ENCODE measurements at regions of chr3 and their contacts with region 1.

Region 1: DNA sequence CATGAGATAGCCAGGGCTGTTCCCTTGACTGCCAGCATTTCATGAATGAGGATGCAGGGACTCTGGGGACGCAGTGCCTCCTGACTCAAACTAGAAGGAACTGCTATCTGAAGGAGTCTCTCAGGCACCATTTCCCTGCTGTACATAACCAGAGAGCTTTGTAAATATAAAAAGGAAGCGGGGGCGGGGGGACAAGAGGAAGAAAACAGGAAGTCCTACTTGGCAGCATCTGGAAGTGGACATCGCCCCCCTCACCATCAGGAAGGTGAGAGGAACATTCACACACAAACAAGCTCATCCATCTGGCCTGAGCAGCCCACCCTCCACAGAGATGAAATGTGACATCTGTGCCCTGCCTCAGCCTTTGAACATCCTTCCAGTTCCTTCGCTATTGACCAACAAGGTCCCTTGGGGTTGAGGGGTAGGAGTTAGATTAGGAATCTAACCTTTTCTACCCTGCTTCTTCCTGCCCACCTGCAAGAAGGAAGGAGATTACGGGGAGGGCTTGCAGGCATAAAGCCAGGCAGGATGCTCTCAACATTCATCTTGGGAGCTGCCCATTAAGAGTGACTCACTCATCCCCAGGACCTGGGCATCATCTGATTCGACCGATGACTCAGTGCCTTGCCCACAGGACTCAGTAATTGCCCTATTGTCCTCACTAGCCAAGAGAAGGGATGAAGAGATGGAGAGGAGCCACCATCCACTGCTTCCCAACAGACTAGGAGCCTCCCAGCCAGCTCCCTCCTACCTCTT is 31.9 kb downstream of the SH3BP5 start:
- DNase-seq: no peak
- ATAC-seq: peak; percentile 83
- H3K4me3 ChIP-seq: no peak overlapping the region
- H3K4me3 Mint-ChIP-seq: peak overlapping the region; percentile 1 to 62 (median 50)
- H3K27ac ChIP-seq: no peak overlapping the region
- H3K27ac Mint-ChIP-seq: peak overlapping the region in 6 of 9 donors; percentile 5 to 65 (median 38)
- H3K4me1 ChIP-seq: peaks cover 47 to 73% of the 10 kb centered on the region in 2 donors
- H3K4me1 Mint-ChIP-seq: peaks cover 51 to 97% (median 78%) of the 10 kb centered on the region in 7 donors
- H3K27me3 ChIP-seq: no peaks in the 10 kb centered on the region
- H3K27me3 Mint-ChIP-seq: no peaks in the 10 kb centered on the region

Region 2: GRCh38 chr3:15319575-15319974 is 19.1 kb after region 1 on chr3:
- CTCF ChIA-PET with region 1: interaction called, 3 read pairs
- POLR2A ChIA-PET with region 1: interaction called, 9 read pairs
- intact Hi-C with region 1: loop called in 1 of 2 experiments (anchors 2 kb)
- DNase-seq: no peak
- ATAC-seq: no peak
- H3K4me3 ChIP-seq: no peak overlapping the region
- H3K4me3 Mint-ChIP-seq: peak overlapping the region in 6 of 10 donors; percentile 44 to 71 (median 66)
- H3K27ac ChIP-seq: no peak overlapping the region
- H3K27ac Mint-ChIP-seq: peak overlapping the region in 8 of 9 donors; percentile 33 to 90 (median 62)
- H3K4me1 ChIP-seq: peaks cover 46 to 64% of the 10 kb centered on the region in 2 donors
- H3K4me1 Mint-ChIP-seq: peaks cover 40 to 91% (median 77%) of the 10 kb centered on the region in 7 donors
- H3K27me3 ChIP-seq: no peaks in the 10 kb centered on the region
- H3K27me3 Mint-ChIP-seq: no peaks in the 10 kb centered on the region